ENCODE measurements at regions of chr4 and their contacts with region 1.

Region 1: GRCh38 chr4:119314356-119314755 is 7.6 kb downstream of the FABP2 start:
- DNase-seq: peak; percentile 11
- ATAC-seq: peak; percentile 51
- H3K4me3 Mint-ChIP-seq: no peak overlapping the region
- H3K27ac Mint-ChIP-seq: no peak overlapping the region
- H3K4me1 Mint-ChIP-seq: no peaks in the 10 kb centered on the region
- H3K27me3 Mint-ChIP-seq: peaks cover 9% of the 10 kb centered on the region

Region 2: GRCh38 chr4:119087121-119087520 is 227.2 kb before region 1 on chr4:
- CTCF ChIA-PET with region 1: no interaction called
- POLR2A ChIA-PET with region 1: no interaction called
- intact Hi-C with region 1: no loop called
- DNase-seq: no peak
- ATAC-seq: no peak
- H3K4me3 Mint-ChIP-seq: no peak overlapping the region
- H3K27ac Mint-ChIP-seq: no peak overlapping the region
- H3K4me1 Mint-ChIP-seq: no peaks in the 10 kb centered on the region
- H3K27me3 Mint-ChIP-seq: no peaks in the 10 kb centered on the region

Region 3: DNA sequence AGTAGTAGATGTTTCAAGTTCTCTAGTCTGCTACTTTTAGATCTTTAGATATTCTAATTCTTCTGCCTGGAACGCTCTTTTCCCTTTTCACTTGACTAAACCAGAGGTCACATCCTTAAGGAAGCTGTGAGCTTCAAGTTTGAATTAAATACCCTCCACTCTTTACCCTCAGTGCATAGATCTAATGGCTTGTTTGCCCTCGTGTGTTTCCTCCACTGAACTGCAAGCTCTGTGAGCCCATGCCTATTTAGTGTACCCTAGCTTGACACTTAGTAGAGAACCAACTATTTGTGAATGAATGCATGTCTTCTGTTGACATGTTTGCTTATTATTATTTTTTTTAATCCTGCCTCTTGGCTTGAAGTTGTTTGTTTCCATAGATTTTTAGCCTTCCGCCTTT is 176.0 kb after region 1 on chr4:
- CTCF ChIA-PET with region 1: no interaction called
- POLR2A ChIA-PET with region 1: no interaction called
- intact Hi-C with region 1: loop called in 1 of 2 experiments (anchors 10 kb)
- DNase-seq: no peak
- ATAC-seq: no peak
- H3K4me3 Mint-ChIP-seq: no peak overlapping the region
- H3K27ac Mint-ChIP-seq: no peak overlapping the region
- H3K4me1 Mint-ChIP-seq: no peaks in the 10 kb centered on the region
- H3K27me3 Mint-ChIP-seq: no peaks in the 10 kb centered on the region

Region 4: GRCh38 chr4:119570401-119570800 is 256.0 kb after region 1 on chr4:
- CTCF ChIA-PET with region 1: no interaction called
- POLR2A ChIA-PET with region 1: no interaction called
- intact Hi-C with region 1: no loop called
- DNase-seq: no peak
- ATAC-seq: no peak
- H3K4me3 Mint-ChIP-seq: no peak overlapping the region
- H3K27ac Mint-ChIP-seq: no peak overlapping the region
- H3K4me1 Mint-ChIP-seq: no peaks in the 10 kb centered on the region
- H3K27me3 Mint-ChIP-seq: no peaks in the 10 kb centered on the region